ENCODE measurements at regions of chr1 and their contacts with region 1.

Region 1: GRCh38 chr1:85406887-85407533 is 57.9 kb downstream of the DDAH1 start:
- DNase-seq: peak; percentile 70
- H3K4me3 ChIP-seq: peak overlapping the region in 1 of 4 donors; percentile 8
- H3K27ac ChIP-seq: peak overlapping the region; percentile 54 to 81 (median 64)
- H3K4me1 ChIP-seq: peaks cover 0 to 40% (median 26%) of the 10 kb centered on the region in 4 donors
- H3K27me3 ChIP-seq: no peaks in the 10 kb centered on the region
- CTCF ChIP-seq: no peak
- EP300 ChIP-seq: no peak
- POLR2A ChIP-seq: no peak

Region 2: DNA sequence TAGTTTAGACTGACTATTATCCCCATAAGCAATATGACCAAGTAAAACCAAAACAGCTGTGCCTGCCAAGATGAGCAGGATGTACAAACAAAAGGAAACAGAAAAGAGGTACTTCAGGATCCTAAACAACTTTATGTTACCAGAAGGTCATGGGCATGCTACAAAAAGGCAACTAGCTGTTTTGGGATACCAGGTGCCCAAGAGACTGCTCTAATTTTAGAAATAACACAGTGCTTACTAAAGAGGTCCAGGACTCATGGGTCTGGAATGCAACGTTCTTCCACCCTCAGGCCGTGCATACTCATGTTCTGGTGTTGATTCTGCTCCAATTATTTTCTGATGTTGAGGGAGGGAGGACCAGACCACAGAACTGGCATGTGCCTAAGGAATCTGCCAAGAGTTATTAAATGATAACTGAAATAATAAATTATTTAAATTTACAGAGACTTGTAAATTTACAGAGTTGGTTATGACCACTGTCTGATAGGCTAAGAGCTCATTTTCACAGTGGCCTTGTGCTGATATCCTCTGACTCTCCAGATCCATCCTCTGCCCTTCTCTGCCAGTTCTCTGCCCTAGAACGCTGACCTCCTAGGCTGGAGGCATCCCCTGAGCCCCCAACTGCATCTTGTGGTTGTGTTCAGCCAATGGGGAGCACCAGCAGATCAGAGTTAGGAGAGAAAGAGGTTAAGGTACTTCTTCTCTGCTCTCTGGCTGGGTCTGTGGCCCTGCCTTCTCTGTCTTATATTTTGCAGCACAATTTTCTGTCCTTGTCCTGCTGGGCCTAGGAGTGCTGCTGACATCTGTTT is 92.9 kb before region 1 on chr1:
- intact Hi-C with region 1: loop called (anchors 10 kb)
- DNase-seq: no peak
- H3K4me3 ChIP-seq: no peak overlapping the region
- H3K27ac ChIP-seq: peak overlapping the region; percentile 9 to 73 (median 45)
- H3K4me1 ChIP-seq: peaks cover 0 to 22% (median 16%) of the 10 kb centered on the region in 4 donors
- H3K27me3 ChIP-seq: no peaks in the 10 kb centered on the region
- CTCF ChIP-seq: no peak
- EP300 ChIP-seq: no peak
- POLR2A ChIP-seq: no peak

Region 3: GRCh38 chr1:85464497-85465098 is 57.6 kb after region 1 on chr1:
- intact Hi-C with region 1: loop called (anchors 5 kb)
- DNase-seq: peak; percentile 81
- H3K4me3 ChIP-seq: peak overlapping the region; percentile 53 to 79 (median 72)
- H3K27ac ChIP-seq: peak overlapping the region; percentile 67 to 83 (median 76)
- H3K4me1 ChIP-seq: peaks cover 0 to 35% (median 27%) of the 10 kb centered on the region in 4 donors
- H3K27me3 ChIP-seq: no peaks in the 10 kb centered on the region
- CTCF ChIP-seq: no peak
- EP300 ChIP-seq: no peak
- POLR2A ChIP-seq: no peak

Region 4: GRCh38 chr1:85475055-85475454 is 68.0 kb after region 1 on chr1:
- intact Hi-C with region 1: no loop called
- DNase-seq: no peak
- H3K4me3 ChIP-seq: no peak overlapping the region
- H3K27ac ChIP-seq: no peak overlapping the region
- H3K4me1 ChIP-seq: no peaks in the 10 kb centered on the region
- H3K27me3 ChIP-seq: no peaks in the 10 kb centered on the region
- CTCF ChIP-seq: no peak
- EP300 ChIP-seq: no peak
- POLR2A ChIP-seq: no peak

Region 5: DNA sequence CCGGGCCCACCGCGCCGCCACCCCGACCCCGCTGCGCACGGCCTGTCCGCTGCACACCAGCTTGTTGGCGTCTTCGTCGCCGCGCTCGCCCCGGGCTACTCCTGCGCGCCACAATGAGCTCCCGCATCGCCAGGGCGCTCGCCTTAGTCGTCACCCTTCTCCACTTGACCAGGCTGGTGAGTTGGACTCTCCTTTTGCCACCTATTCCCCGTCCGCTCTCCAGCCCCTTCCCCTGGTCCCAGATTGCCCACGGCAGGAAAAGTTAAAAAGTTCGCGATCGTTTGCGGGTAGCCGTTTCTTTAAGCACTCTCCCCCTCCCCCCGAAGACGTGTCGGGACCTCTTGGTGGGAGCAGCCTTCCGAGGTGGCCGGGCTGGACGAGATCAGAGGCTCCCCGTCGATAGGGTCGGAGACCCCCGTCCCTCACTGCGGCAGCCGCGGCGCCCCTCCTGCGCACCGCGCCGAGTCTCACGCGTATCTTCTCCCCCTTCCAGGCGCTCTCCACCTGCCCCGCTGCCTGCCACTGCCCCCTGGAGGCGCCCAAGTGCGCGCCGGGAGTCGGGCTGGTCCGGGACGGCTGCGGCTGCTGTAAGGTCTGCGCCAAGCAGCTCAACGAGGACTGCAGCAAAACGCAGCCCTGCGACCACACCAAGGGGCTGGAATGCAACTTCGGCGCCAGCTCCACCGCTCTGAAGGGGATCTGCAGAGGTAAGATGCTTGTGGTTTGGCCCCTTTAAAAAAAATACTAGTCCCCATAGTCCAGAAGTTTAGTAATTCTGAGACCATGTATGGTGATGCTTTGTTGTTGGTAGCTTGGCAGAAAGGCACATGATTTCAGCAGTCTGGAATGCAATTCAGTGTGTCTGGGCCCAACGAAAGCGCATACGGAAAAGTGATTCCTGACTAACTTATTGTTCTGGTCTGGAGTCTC is 174.1 kb after region 1 on chr1:
- intact Hi-C with region 1: no loop called
- DNase-seq: peak; percentile 92
- H3K4me3 ChIP-seq: peak overlapping the region; percentile 61 to 87 (median 77)
- H3K27ac ChIP-seq: peak overlapping the region; percentile 96 to 99 (median 98)
- H3K4me1 ChIP-seq: peaks cover 0 to 64% (median 52%) of the 10 kb centered on the region in 4 donors
- H3K27me3 ChIP-seq: no peaks in the 10 kb centered on the region
- CTCF ChIP-seq: peak; percentile 78 to 93 (median 85)
- EP300 ChIP-seq: no peak
- POLR2A ChIP-seq: no peak

Region 6: GRCh38 chr1:85599076-85599491 is 192.1 kb after region 1 on chr1:
- intact Hi-C with region 1: no loop called
- DNase-seq: no peak
- H3K4me3 ChIP-seq: no peak overlapping the region
- H3K27ac ChIP-seq: peak overlapping the region; percentile 28 to 56 (median 47)
- H3K4me1 ChIP-seq: peaks cover 0 to 31% (median 13%) of the 10 kb centered on the region in 4 donors
- H3K27me3 ChIP-seq: no peaks in the 10 kb centered on the region
- CTCF ChIP-seq: no peak
- EP300 ChIP-seq: no peak
- POLR2A ChIP-seq: no peak